ENCODE measurements at regions of chr3 and their contacts with region 1.

Region 1: GRCh38 chr3:42101048-42101447 is 9.9 kb downstream of the TRAK1 start:
- DNase-seq: peak; percentile 32
- H3K4me3 ChIP-seq: no peak overlapping the region
- H3K27ac ChIP-seq: peak overlapping the region; percentile 39
- H3K27me3 ChIP-seq: no peaks in the 10 kb centered on the region
- CTCF ChIP-seq: no peak

Region 2: GRCh38 chr3:41888368-41889076 is 212.5 kb before region 1 on chr3:
- CTCF ChIA-PET with region 1: interaction called, 10 read pairs
- POLR2A ChIA-PET with region 1: no interaction called
- DNase-seq: no peak
- H3K4me3 ChIP-seq: no peak overlapping the region
- H3K27ac ChIP-seq: no peak overlapping the region
- H3K27me3 ChIP-seq: no peaks in the 10 kb centered on the region
- CTCF ChIP-seq: no peak

Region 3: DNA sequence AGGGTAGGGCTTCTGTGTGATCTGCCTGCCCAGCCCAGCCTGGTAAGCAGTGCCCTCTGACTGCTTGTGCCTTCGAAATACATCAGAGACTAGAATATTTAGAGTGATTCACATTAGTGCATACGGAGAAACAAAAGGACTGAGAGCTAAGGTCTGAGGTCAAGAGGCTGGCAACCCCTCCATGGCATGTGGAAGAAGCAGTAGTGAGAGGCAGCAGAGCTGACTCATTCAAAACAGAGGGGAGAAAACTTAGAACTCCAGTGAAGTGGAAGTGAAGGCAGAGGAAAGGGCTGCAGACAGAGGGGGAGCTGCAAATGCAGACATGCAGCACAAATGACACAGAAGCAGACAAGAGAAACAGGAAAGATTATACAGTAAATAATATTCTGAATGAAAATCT is 200.8 kb before region 1 on chr3:
- CTCF ChIA-PET with region 1: interaction called, 142 read pairs
- POLR2A ChIA-PET with region 1: no interaction called
- DNase-seq: no peak
- H3K4me3 ChIP-seq: no peak overlapping the region
- H3K27ac ChIP-seq: no peak overlapping the region
- H3K27me3 ChIP-seq: no peaks in the 10 kb centered on the region
- CTCF ChIP-seq: no peak

Region 4: GRCh38 chr3:41961750-41962679 is 139.0 kb before region 1 on chr3 and contains the start of gene ULK4:
- CTCF ChIA-PET with region 1: interaction called, 9 read pairs
- POLR2A ChIA-PET with region 1: interaction called, 15 read pairs
- DNase-seq: peak; percentile 100
- H3K4me3 ChIP-seq: peak within 1 kb of the TSS; percentile 87
- H3K27ac ChIP-seq: peak within 1 kb of the TSS; percentile 73
- H3K27me3 ChIP-seq: peaks cover 5% of the 10 kb centered on the region
- CTCF ChIP-seq: no peak
- polyA plus RNA-seq, gene ULK4: 2.8 and 3.7 TPM in 2 replicates

Region 5: GRCh38 chr3:42012935-42013690 is 87.9 kb before region 1 on chr3:
- CTCF ChIA-PET with region 1: interaction called, 31 read pairs
- POLR2A ChIA-PET with region 1: no interaction called
- DNase-seq: no peak
- H3K4me3 ChIP-seq: peak overlapping the region; percentile 79
- H3K27ac ChIP-seq: no peak overlapping the region
- H3K27me3 ChIP-seq: no peaks in the 10 kb centered on the region
- CTCF ChIP-seq: no peak

Region 6: GRCh38 chr3:42071904-42072592 is 29.0 kb before region 1 on chr3:
- CTCF ChIA-PET with region 1: interaction called, 11 read pairs
- POLR2A ChIA-PET with region 1: no interaction called
- DNase-seq: no peak
- H3K4me3 ChIP-seq: peak overlapping the region; percentile 43
- H3K27ac ChIP-seq: peak overlapping the region; percentile 82
- H3K27me3 ChIP-seq: no peaks in the 10 kb centered on the region
- CTCF ChIP-seq: no peak

Region 7: DNA sequence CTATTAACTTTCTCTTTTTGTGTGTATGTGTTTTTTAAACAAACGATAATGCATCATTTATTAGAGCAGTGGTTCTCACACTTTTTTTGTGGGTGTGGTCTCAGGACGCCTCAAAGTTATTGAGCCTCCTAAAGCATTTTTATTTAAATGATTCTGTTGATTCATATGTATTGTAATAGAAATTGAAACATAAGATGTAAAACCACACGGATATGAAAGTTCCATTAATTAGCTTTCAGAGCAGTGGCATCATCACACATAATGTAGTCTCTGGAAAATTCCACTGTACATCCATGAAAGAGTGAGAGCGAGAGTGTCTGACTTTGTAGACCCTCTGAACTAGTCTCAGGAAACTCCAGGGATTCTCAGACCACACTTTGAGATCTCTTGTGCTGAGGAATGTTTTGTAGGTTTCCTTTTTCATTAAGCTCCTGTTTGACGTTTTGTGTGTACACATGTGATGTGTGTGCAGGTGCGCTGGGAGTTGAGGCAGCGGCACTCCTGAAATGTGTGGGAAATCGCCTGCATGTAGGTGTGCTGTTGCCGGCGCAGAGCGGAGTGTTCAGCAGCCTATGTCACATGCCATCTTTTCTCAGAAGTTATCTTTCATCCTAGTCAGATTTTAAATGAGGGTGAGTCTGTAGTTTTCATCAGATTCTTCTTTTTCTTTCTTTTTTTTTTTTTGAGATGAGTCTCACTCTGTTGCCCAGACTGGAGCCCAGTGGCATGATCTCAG is 15.2 kb before region 1 on chr3:
- CTCF ChIA-PET with region 1: interaction called, 35 read pairs
- POLR2A ChIA-PET with region 1: no interaction called
- DNase-seq: no peak
- H3K4me3 ChIP-seq: no peak overlapping the region
- H3K27ac ChIP-seq: no peak overlapping the region
- H3K27me3 ChIP-seq: no peaks in the 10 kb centered on the region
- CTCF ChIP-seq: no peak